AG04450 (cell line): ENCODE measurements at regions of chr6 and their contacts with region 1.

Region 1: DNA sequence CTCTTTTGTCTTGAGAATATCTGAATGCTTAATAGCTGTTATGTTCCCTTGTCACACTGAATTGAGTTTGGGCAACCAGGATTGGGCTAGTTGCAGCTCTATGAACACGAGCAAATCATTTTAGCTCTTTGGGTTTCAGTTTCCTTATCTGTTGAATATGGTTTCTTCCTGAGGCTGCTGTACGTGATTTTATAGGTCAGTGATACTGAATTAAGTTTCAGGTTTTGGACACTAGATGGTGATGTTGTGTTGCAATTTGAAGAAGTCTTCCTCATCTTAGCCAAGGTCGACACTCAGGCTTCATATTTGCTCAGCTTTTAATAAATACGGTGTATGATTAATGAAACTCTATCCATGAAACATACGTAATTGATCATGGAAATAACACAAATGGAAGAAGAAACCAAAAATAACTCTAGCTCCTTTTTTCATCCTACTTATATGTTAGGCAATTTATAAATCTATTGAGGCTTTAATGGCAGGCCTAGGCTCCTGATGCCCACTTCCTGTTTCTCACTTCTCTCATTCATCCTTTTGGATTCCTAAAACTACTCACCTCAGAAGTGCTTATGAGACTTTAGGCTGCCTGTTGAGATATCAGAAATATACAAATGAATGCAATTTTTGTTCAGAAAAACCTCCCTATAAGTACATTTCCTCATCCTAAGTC is 354.1 kb upstream of the MAP3K7 start:
- DNase-seq: peak; percentile 10
- H3K4me3 ChIP-seq: no peak overlapping the region
- H3K27ac ChIP-seq: no peak overlapping the region
- H3K27me3 ChIP-seq: no peaks in the 10 kb centered on the region
- CTCF ChIP-seq: peak; percentile 54

Region 2: GRCh38 chr6:90928051-90928450 is 12.9 kb before region 1 on chr6:
- CTCF ChIA-PET with region 1: interaction called, 11 read pairs
- POLR2A ChIA-PET with region 1: no interaction called
- DNase-seq: no peak
- H3K4me3 ChIP-seq: no peak overlapping the region
- H3K27ac ChIP-seq: no peak overlapping the region
- H3K27me3 ChIP-seq: no peaks in the 10 kb centered on the region
- CTCF ChIP-seq: no peak

Region 3: GRCh38 chr6:90952176-90952575 is 11.2 kb after region 1 on chr6:
- CTCF ChIA-PET with region 1: interaction called, 10 read pairs
- POLR2A ChIA-PET with region 1: no interaction called
- DNase-seq: no peak
- H3K4me3 ChIP-seq: no peak overlapping the region
- H3K27ac ChIP-seq: no peak overlapping the region
- H3K27me3 ChIP-seq: no peaks in the 10 kb centered on the region
- CTCF ChIP-seq: no peak

Region 4: DNA sequence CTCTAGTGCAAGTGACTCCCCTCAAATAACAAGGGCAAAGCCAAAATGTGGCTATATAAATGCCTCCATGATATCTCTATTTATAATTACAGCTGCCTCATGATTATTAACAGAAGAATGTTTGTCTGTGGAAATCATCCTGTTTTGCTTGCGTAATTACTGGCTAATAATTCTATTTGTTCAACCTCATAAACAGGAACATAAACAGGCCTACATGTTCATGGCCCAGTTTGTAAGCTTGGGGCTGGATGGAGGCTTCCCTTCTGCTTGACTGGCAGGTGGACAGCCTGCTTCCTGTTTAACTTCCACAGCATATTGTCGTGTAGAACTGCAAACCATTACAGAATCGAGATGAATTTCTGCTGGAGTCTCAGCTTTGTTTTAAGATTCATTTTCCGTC is 411.9 kb after region 1 on chr6:
- CTCF ChIA-PET with region 1: no interaction called
- POLR2A ChIA-PET with region 1: no interaction called
- DNase-seq: no peak
- H3K4me3 ChIP-seq: no peak overlapping the region
- H3K27ac ChIP-seq: no peak overlapping the region
- H3K27me3 ChIP-seq: no peaks in the 10 kb centered on the region
- CTCF ChIP-seq: no peak